Activated CD4-positive, alpha-beta memory T cell treated with anti-CD3 and anti-CD28 coated beads, Interleukin-2, amount 10 ng/mL, durations not matched to agents 7 days and 5 days (primary cell): ENCODE measurements at regions of chr1 and their contacts with region 1.

Region 1: GRCh38 chr1:44721485-44722361 is 9.2 kb downstream of the RNU5D-1 start:
- DNase-seq: peak; percentile 87
- H3K4me3 Mint-ChIP-seq: peak overlapping the region; percentile 52
- H3K27ac Mint-ChIP-seq: peak overlapping the region; percentile 94
- H3K4me1 Mint-ChIP-seq: peaks cover 71% of the 10 kb centered on the region
- H3K27me3 Mint-ChIP-seq: no peaks in the 10 kb centered on the region

Region 2: GRCh38 chr1:44553771-44554170 is 168.0 kb before region 1 on chr1:
- CTCF ChIA-PET with region 1: no interaction called
- POLR2A ChIA-PET with region 1: no interaction called
- DNase-seq: no peak
- H3K4me3 Mint-ChIP-seq: no peak overlapping the region
- H3K27ac Mint-ChIP-seq: no peak overlapping the region
- H3K4me1 Mint-ChIP-seq: no peaks in the 10 kb centered on the region
- H3K27me3 Mint-ChIP-seq: peaks cover 36% of the 10 kb centered on the region

Region 3: GRCh38 chr1:44652445-44653106 is 69.1 kb before region 1 on chr1:
- CTCF ChIA-PET with region 1: no interaction called
- POLR2A ChIA-PET with region 1: interaction called, 13 read pairs
- DNase-seq: peak; percentile 77
- H3K4me3 Mint-ChIP-seq: no peak overlapping the region
- H3K27ac Mint-ChIP-seq: no peak overlapping the region
- H3K4me1 Mint-ChIP-seq: no peaks in the 10 kb centered on the region
- H3K27me3 Mint-ChIP-seq: no peaks in the 10 kb centered on the region

Region 4: GRCh38 chr1:44739361-44740178 is 17.8 kb after region 1 on chr1 and contains the start of gene KIF2C:
- CTCF ChIA-PET with region 1: interaction called, 6 read pairs
- POLR2A ChIA-PET with region 1: interaction called, 785 read pairs
- DNase-seq: peak; percentile 98
- H3K4me3 Mint-ChIP-seq: peak within 1 kb of the TSS; percentile 91
- H3K27ac Mint-ChIP-seq: peak within 1 kb of the TSS; percentile 84
- H3K4me1 Mint-ChIP-seq: peaks cover 45% of the 10 kb centered on the region
- H3K27me3 Mint-ChIP-seq: peaks cover 3% of the 10 kb centered on the region
- total RNA-seq, gene KIF2C: 105 to 106 TPM

Region 5: GRCh38 chr1:44807262-44808062 is 85.7 kb after region 1 on chr1 and contains the start of gene DYNLT4:
- CTCF ChIA-PET with region 1: interaction called, 5 read pairs
- POLR2A ChIA-PET with region 1: interaction called, 161 read pairs
- DNase-seq: peak; percentile 93
- H3K4me3 Mint-ChIP-seq: peak within 1 kb of the TSS; percentile 73
- H3K27ac Mint-ChIP-seq: peak within 1 kb of the TSS; percentile 98
- H3K4me1 Mint-ChIP-seq: peaks cover 92% of the 10 kb centered on the region
- H3K27me3 Mint-ChIP-seq: no peaks in the 10 kb centered on the region
- total RNA-seq, gene DYNLT4: 1.9 to 2.2 TPM

Region 6: GRCh38 chr1:45011837-45012638 is 290.3 kb after region 1 on chr1 and contains the start of gene UROD:
- CTCF ChIA-PET with region 1: interaction called, 8 read pairs
- POLR2A ChIA-PET with region 1: interaction called, 76 read pairs
- DNase-seq: peak; percentile 94
- H3K4me3 Mint-ChIP-seq: peak within 1 kb of the TSS; percentile 81
- H3K27ac Mint-ChIP-seq: peak within 1 kb of the TSS; percentile 85
- H3K4me1 Mint-ChIP-seq: peaks cover 47% of the 10 kb centered on the region
- H3K27me3 Mint-ChIP-seq: no peaks in the 10 kb centered on the region
- total RNA-seq, gene UROD: 67.1 to 74.9 TPM

Region 7: GRCh38 chr1:45499415-45499769 is 777.7 kb after region 1 on chr1:
- CTCF ChIA-PET with region 1: no interaction called
- POLR2A ChIA-PET with region 1: interaction called, 11 read pairs
- DNase-seq: peak; percentile 40
- H3K4me3 Mint-ChIP-seq: peak overlapping the region; percentile 88
- H3K27ac Mint-ChIP-seq: peak overlapping the region; percentile 77
- H3K4me1 Mint-ChIP-seq: peaks cover 36% of the 10 kb centered on the region
- H3K27me3 Mint-ChIP-seq: no peaks in the 10 kb centered on the region